Heart left ventricle (tissue), 16 donors: ENCODE measurements at regions of chr7 and their contacts with region 1.

Region 1: DNA sequence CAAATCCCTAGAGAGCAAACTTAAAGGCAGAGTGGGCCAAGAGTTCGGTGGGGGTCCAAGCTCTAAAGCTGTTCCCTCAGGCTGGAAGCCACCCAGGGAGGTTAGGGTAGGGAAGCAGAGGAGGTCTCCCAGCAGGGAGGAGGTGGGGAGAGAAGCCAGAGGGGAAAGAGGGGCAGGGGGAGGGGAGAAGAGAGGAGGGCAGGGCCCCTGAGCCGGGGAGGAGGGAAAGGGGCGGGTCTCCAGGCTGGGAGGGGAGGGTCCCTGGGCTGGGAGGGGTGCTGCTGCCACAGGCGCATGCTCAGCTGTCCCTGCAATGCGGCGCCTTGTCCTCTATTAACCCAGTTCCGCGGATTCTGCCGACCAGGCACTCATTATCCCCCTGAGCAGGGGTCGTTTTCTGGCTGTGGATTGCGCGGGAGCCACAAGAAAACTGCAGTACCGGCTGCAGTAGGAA is 49.4 kb downstream of the CAMK2B start:
- DNase-seq: peak in 3 of 5 donors; percentile 14 to 45 (median 29)
- ATAC-seq: no peak
- H3K4me3 ChIP-seq: no peak overlapping the region
- H3K27ac ChIP-seq: peak overlapping the region in 2 of 12 donors; percentile 23 to 74
- H3K4me1 ChIP-seq: peaks cover 0 to 73% (median 23%) of the 10 kb centered on the region in 12 donors
- H3K27me3 ChIP-seq: no peaks in the 10 kb centered on the region
- CTCF ChIP-seq: no peak
- POLR2A ChIP-seq: no peak

Region 2: DNA sequence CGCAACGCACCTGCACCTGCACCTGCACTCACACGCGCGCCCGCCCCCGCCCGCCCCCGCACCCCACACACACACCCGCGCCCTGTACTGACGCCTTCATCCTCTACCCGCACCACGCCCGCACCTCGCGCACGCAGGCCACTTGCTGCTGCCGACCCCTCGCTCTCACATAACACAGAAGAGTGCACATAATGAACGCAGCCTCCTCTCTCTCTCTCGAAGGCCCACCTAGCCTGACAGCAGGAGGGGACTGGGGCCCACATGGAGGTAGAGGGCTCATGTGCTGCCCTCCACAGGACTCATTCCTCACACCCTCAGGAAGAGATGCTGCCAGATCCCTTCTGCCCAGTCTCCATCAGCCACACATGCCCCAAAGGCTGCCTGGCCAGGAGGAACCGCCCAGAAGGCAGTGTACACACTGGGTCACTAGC is 49.8 kb after region 1 on chr7:
- intact Hi-C with region 1: loop called in 1 of 10 experiments (anchors 5 kb)
- DNase-seq: no peak
- ATAC-seq: peak; percentile 20 to 34 (median 24)
- H3K4me3 ChIP-seq: peak overlapping the region in 9 of 12 donors; percentile 7 to 58 (median 37)
- H3K27ac ChIP-seq: peak overlapping the region in 2 of 12 donors; percentile 38 to 91
- H3K4me1 ChIP-seq: peaks cover 0 to 51% (median 7%) of the 10 kb centered on the region in 12 donors
- H3K27me3 ChIP-seq: peaks cover 0 to 25% (median 4%) of the 10 kb centered on the region in 9 donors
- CTCF ChIP-seq: peak in 2 of 12 donors; percentile 27 to 31
- POLR2A ChIP-seq: no peak